Common myeloid progenitor, CD34-positive (primary cell): ENCODE measurements at regions of chr10 and their contacts with region 1.

Region 1: GRCh38 chr10:95246579-95247051 is 44.2 kb downstream of the PDLIM1 start:
- DNase-seq: peak; percentile 82 to 90 (median 83)
- H3K4me3 ChIP-seq: no peak overlapping the region
- H3K27ac ChIP-seq: no peak overlapping the region
- H3K4me1 ChIP-seq: peaks cover 0 to 22% (median 12%) of the 10 kb centered on the region in 4 experiments
- H3K27me3 ChIP-seq: no peaks in the 10 kb centered on the region

Region 2: GRCh38 chr10:94103801-94104221 is 1142.8 kb before region 1 on chr10:
- CTCF ChIA-PET with region 1: no interaction called
- POLR2A ChIA-PET with region 1: no interaction called
- DNase-seq: no peak
- H3K4me3 ChIP-seq: no peak overlapping the region
- H3K27ac ChIP-seq: no peak overlapping the region
- H3K4me1 ChIP-seq: no peaks in the 10 kb centered on the region
- H3K27me3 ChIP-seq: peaks cover 0 to 16% (median 13%) of the 10 kb centered on the region in 5 experiments

Region 3: GRCh38 chr10:94936721-94937120 is 309.9 kb before region 1 on chr10:
- CTCF ChIA-PET with region 1: no interaction called
- POLR2A ChIA-PET with region 1: no interaction called
- DNase-seq: no peak
- H3K4me3 ChIP-seq: no peak overlapping the region
- H3K27ac ChIP-seq: no peak overlapping the region
- H3K4me1 ChIP-seq: no peaks in the 10 kb centered on the region
- H3K27me3 ChIP-seq: no peaks in the 10 kb centered on the region

Region 4: DNA sequence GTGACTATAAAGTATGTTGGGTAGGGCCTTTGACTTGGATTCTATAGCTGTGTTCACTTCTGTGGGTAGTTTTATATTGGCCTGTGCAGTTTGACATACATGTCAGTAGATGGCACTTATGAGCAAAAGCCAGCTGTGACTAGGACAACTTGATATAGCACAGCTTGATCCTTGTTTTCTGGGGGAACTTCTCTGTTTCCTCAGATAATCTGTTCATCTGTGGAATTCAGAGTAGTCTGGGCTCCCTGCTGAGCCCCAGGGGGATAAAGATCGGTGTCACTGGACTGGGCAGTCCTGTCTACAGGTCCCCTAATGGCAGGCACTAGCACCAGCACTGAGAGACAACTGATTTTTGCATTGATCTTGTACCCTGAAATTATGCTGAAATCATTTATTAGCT is 282.7 kb before region 1 on chr10:
- CTCF ChIA-PET with region 1: interaction called, 13 read pairs
- POLR2A ChIA-PET with region 1: no interaction called
- DNase-seq: peak; percentile 24 to 56 (median 53)
- H3K4me3 ChIP-seq: no peak overlapping the region
- H3K27ac ChIP-seq: no peak overlapping the region
- H3K4me1 ChIP-seq: no peaks in the 10 kb centered on the region
- H3K27me3 ChIP-seq: no peaks in the 10 kb centered on the region

Region 5: GRCh38 chr10:95183271-95184230 is 63.1 kb before region 1 on chr10:
- CTCF ChIA-PET with region 1: interaction called, 10 read pairs
- POLR2A ChIA-PET with region 1: no interaction called
- DNase-seq: peak; percentile 85 to 88 (median 88)
- H3K4me3 ChIP-seq: peak overlapping the region; percentile 55 to 97 (median 76)
- H3K27ac ChIP-seq: peak overlapping the region; percentile 54 to 83
- H3K4me1 ChIP-seq: peaks cover 0 to 12% (median 4%) of the 10 kb centered on the region in 4 experiments
- H3K27me3 ChIP-seq: no peaks in the 10 kb centered on the region

Region 6: DNA sequence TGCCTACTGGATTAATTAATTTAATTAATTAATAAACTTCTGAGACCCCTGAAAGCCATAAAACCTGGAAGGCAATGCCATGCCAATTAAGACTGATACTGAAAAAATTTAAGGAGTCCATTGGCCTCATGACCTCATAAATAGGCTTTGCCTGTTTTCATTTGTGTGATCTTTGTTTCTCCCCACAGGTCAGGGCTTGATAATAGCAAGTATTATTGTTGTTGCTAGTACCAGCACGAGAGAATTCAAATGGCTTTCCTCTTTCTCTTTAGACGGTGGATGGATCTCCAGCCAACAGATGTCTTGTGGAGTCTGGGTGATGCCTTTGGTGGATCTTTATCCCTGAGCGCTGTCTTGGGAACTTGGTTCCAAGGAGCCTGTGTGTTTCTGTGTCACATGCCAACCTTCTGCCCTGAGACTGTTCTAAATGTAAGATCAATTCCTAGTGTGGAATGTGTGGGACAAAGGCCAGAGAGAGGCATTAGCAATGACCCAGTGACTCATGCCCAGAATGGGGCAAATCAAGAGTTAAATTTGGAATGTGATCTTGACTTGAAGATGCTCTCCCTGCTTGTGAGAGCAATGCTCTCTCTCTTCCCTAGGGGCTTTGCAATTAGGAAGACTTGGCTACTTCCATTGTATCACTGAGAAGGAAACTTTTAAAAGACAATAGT is 34.9 kb before region 1 on chr10:
- CTCF ChIA-PET with region 1: interaction called, 13 read pairs
- POLR2A ChIA-PET with region 1: no interaction called
- DNase-seq: no peak
- H3K4me3 ChIP-seq: no peak overlapping the region
- H3K27ac ChIP-seq: no peak overlapping the region
- H3K4me1 ChIP-seq: peaks cover 0 to 17% (median 7%) of the 10 kb centered on the region in 4 experiments
- H3K27me3 ChIP-seq: no peaks in the 10 kb centered on the region

Region 7: DNA sequence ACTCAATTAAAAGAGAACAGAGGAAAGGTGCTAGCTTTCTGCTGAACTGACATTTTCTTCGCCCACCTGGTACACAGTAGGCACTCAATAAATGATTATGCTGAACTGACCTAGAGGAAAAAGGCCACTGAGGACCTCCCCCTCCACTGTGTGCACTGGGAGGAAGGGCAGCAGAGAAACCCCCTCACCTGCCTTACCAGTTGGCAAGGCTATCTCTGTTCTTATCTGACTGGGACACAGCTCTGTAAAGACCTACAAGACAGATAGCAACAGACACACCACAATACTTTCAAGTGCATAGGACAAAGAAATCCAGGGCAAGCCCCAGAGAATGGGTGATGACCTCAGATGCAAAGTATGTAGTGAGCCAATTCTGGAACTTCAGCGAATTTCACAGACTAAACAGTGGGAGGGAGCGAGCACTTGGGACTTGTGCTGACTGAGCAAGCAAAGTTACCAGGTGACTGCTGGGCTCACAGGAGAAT is 13.8 kb after region 1 on chr10:
- CTCF ChIA-PET with region 1: interaction called, 12 read pairs
- POLR2A ChIA-PET with region 1: no interaction called
- DNase-seq: no peak
- H3K4me3 ChIP-seq: no peak overlapping the region
- H3K27ac ChIP-seq: no peak overlapping the region
- H3K4me1 ChIP-seq: peaks cover 0 to 5% (median 0%) of the 10 kb centered on the region in 4 experiments
- H3K27me3 ChIP-seq: no peaks in the 10 kb centered on the region

Region 8: GRCh38 chr10:95350219-95350829 is 103.7 kb after region 1 on chr10:
- CTCF ChIA-PET with region 1: interaction called, 399 read pairs
- POLR2A ChIA-PET with region 1: no interaction called
- DNase-seq: no peak
- H3K4me3 ChIP-seq: no peak overlapping the region
- H3K27ac ChIP-seq: no peak overlapping the region
- H3K4me1 ChIP-seq: no peaks in the 10 kb centered on the region
- H3K27me3 ChIP-seq: no peaks in the 10 kb centered on the region

Region 9: DNA sequence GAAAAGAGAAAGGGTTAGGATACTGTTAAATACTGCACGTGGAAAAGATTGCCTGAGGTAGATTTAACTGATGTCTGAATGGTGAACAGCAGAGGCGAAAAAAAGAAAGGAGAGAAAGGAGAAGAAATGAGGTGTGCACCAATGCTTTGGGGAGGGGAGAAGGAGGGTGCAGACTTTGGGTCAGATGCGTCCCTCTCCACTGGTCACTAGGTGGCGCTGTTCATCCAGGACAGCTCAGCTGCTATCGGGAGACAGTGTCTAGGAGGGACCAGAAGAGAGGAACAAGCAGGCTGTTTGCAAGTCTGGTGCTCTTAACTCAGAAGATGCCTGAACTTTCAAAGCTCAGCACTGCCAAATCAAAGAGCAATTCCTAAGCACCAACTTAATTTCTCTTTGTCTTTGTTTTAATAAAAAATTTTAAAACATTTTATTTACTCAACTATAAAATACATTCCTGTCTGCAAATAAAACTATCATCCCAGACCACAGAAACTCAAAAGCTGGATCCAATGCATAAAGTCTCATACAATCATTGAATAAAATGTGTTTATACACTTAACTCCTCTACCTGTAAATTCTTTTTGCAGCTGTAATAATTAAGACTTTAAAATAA is 128.1 kb after region 1 on chr10:
- CTCF ChIA-PET with region 1: interaction called, 10 read pairs
- POLR2A ChIA-PET with region 1: no interaction called
- DNase-seq: peak; percentile 81 to 90 (median 89)
- H3K4me3 ChIP-seq: no peak overlapping the region
- H3K27ac ChIP-seq: no peak overlapping the region
- H3K4me1 ChIP-seq: no peaks in the 10 kb centered on the region
- H3K27me3 ChIP-seq: peaks cover 0 to 4% (median 0%) of the 10 kb centered on the region in 5 experiments

Region 10: DNA sequence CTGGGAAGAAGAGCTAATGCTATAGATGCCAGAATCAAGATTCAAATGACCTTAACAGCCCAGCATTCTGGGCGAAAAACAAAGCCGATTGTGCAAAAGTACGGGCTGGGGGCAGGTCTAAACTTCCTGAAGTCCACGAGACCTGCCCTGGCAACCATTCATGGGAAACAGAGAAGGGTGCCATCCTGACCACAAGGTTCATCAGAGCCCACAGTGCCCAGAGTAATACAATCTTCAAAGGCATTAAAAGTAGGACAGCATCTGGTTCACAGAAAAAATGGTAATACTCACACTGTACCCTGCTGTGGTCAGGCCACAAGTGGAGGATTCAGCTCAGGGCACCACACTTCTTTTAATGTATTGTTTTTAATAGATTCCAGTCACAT is 278.4 kb after region 1 on chr10:
- CTCF ChIA-PET with region 1: no interaction called
- POLR2A ChIA-PET with region 1: no interaction called
- DNase-seq: peak in 1 of 3 donors; percentile 32
- H3K4me3 ChIP-seq: no peak overlapping the region
- H3K27ac ChIP-seq: no peak overlapping the region
- H3K4me1 ChIP-seq: peaks cover 0 to 11% (median 3%) of the 10 kb centered on the region in 4 experiments
- H3K27me3 ChIP-seq: no peaks in the 10 kb centered on the region

Region 11: GRCh38 chr10:95656291-95657164 is 409.9 kb after region 1 on chr10 and contains the start of gene ALDH18A1:
- CTCF ChIA-PET with region 1: no interaction called
- POLR2A ChIA-PET with region 1: no interaction called
- DNase-seq: peak; percentile 93 to 97 (median 96)
- H3K4me3 ChIP-seq: peak within 1 kb of the TSS; percentile 65 to 91 (median 83)
- H3K27ac ChIP-seq: peak within 1 kb of the TSS in 1 of 2 experiments; percentile 65
- H3K4me1 ChIP-seq: peaks cover 7 to 13% (median 9%) of the 10 kb centered on the region in 4 experiments
- H3K27me3 ChIP-seq: no peaks in the 10 kb centered on the region